Activated T-helper 2 cell treated with anti-CD3 and anti-CD28 coated beads, Interferon-gamma antibody, Interleukin-2, Interleukin-4, amounts not matched to agents 10 μg/mL and 5 μg/mL and 100 μg/mL, durations not matched to agents 14 hours and 24 hours and 36 hours (primary cell): ENCODE measurements at regions of chr12 and their contacts with region 1.

Region 1: DNA sequence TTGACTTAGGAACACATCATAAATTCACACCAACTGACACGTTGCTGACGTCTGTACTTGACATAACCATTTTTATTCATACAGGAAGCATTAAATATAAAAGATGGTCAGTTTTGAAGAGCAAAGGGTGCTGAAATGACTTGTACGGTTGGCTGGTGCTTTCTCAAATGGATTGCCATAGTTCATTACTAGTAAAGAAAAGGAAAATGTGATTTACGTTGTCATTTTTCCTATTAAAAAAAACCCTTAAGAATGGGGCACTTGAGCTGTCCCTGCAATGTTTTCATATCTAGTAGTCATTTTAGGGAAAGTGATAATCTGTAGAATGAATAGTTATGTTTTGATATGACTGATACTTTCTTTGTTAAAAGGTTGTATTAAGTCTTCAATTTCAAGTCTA is 22.5 kb upstream of the MANSC4 start:
- DNase-seq: no peak
- H3K4me3 Mint-ChIP-seq: no peak overlapping the region
- H3K27ac Mint-ChIP-seq: no peak overlapping the region
- H3K4me1 Mint-ChIP-seq: peaks cover 36% of the 10 kb centered on the region
- H3K27me3 Mint-ChIP-seq: peaks cover 17% of the 10 kb centered on the region

Region 2: DNA sequence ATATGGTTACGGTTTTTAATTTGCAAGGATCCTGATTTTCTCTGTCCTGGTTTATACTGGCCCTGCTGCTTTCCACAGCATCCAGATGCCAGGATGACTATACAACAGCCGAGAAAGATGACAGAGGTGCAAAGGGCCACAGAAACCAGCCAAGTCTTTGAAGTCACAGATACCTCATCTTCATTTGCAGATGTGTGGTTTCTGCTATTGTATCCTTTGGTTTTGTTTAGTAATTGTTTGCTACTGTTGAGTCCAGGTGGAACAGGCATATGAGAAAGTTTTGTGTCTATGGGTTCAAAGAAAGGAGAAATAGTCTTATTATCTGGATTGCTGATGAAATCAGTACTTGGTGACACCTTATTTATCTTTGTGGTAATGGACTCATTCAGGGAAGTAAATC is 39.8 kb before region 1 on chr12:
- intact Hi-C with region 1: loop called (anchors 1 kb)
- DNase-seq: no peak
- H3K4me3 Mint-ChIP-seq: no peak overlapping the region
- H3K27ac Mint-ChIP-seq: no peak overlapping the region
- H3K4me1 Mint-ChIP-seq: peaks cover 20% of the 10 kb centered on the region
- H3K27me3 Mint-ChIP-seq: no peaks in the 10 kb centered on the region

Region 3: DNA sequence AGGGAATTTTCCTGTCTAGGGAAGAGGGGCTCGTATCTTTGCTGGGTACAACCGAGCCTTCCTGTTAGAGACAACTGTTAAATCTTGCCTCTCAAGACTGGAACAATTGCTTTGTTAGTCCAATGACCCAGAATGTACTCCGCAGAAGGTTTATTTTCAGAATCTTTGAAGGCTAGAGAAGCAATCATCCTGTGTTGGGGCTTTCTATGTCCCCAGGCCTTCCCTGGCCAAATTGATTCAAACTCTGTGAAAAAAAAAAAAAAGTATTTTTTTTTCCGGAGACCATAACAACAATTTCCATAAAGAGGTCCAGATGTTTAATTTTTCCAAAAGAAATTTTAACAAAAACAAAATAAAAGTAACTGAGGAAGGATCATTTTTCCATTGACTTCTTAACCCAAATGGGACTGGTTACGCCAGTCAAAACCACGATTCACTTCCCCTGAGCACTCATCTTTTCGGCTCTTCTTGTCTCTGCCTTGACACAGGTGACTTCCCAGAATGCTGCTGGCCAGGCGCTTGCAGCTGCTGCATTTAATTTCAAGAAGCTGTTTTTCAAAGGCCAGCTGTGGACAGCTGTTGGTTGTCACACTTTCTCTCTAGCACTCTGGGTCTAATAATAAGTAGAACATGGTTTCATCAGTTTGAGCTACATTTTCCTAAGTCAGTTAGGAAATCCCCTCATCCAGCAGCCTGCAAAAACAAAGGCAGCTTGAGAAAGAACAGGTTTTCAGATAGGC is 59.1 kb after region 1 on chr12:
- intact Hi-C with region 1: loop called (anchors 5 kb)
- DNase-seq: no peak
- H3K4me3 Mint-ChIP-seq: no peak overlapping the region
- H3K27ac Mint-ChIP-seq: no peak overlapping the region
- H3K4me1 Mint-ChIP-seq: peaks cover 21% of the 10 kb centered on the region
- H3K27me3 Mint-ChIP-seq: peaks cover 7% of the 10 kb centered on the region